Lower leg skin (tissue), 4 donors: ENCODE measurements at regions of chr1 and their contacts with region 1.

Region 1: GRCh38 chr1:10941891-10942541 is 70.4 kb upstream of the TARDBP start:
- DNase-seq: no peak
- H3K4me3 ChIP-seq: no peak overlapping the region
- CTCF ChIP-seq: peak in 1 of 3 donors; percentile 61
- POLR2A ChIP-seq: no peak

Region 2: DNA sequence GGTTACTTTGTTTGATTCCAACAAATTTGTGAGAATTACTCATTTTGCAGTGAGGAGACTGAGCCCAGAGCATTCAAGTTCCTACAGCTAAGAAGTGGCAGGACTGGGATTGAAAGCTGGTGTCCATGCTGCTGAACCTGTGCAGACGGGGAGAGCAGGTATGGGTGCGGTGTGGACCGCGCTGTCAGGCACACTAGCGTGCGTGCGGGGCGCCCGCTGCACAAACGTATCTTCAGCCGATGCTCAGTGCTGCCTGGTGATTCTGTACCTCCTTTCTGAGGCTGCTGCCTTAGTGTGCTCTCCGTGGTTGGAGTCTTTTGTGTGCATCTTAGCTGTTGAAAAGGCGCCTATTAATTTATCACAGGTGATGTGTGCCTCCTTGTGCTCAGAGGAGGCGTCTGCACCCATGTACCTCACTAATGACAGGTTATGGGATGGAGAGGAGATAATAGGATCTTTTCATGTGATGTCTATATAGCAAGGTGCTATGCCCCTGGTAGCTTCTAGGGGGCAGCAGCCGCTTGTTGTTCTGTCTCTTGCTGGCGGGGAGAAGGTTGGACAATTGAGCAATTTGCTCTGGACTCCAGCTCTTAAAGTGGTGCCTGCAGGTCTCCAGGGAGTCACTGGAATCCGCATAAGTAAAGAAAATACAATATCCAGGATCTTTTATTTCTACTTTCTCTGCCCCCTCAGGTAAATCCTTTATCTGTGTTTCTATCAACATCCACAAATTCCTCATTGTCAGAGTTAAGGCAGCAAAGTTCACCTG is 434.7 kb before region 1 on chr1:
- intact Hi-C with region 1: loop called (anchors 10 kb)
- DNase-seq: no peak
- H3K4me3 ChIP-seq: no peak overlapping the region
- CTCF ChIP-seq: peak in 1 of 3 donors; percentile 10
- POLR2A ChIP-seq: no peak

Region 3: GRCh38 chr1:10909697-10910671 is 32.0 kb before region 1 on chr1:
- intact Hi-C with region 1: no loop called
- DNase-seq: no peak
- H3K4me3 ChIP-seq: no peak overlapping the region
- CTCF ChIP-seq: no peak
- POLR2A ChIP-seq: no peak